ENCODE measurements at regions of chr6 and their contacts with region 1.

Region 1: DNA sequence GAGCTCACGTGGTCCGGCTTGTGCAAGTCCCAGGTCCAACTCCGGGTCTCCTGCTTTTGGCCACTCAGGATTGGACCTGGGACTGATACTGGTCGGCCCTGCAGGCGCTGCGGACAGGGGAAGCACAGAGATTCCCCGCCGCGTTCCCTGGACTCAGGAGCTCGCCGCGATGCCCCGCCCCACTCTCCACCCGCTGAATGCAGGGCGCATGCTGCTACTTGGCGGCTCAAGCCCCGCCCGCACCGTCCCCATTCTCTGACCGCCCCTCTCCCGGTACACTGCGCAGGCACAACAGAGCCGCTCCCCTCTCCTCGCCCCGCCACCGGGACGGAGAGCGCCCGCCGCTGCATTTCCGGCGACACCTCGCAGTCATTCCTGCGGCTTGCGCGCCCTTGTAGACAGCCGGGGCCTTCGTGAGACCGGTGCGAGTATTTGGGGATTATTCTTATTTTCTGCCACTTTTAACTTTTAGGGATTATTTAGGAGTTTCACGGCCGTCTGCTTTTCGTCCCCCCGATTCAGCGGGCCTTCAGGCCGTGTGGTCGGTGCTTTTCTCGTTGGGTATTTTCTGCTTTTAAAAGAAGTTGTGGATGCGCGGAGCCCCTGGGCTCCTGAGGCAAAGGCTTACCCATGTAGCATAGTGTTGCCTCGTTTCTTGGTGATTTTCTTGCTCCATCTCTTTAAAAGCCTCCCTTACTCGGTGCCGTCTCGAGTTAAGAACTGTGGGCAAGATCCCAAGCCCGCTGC is at the start of gene TMEM14C:
- DNase-seq: peak; percentile 95
- ATAC-seq: peak; percentile 99
- H3K4me3 ChIP-seq: peak within 1 kb of the TSS; percentile 78 to 85
- H3K27ac ChIP-seq: peak within 1 kb of the TSS; percentile 71
- H3K4me1 ChIP-seq: peaks cover 12 to 21% of the 10 kb centered on the region in 2 experiments; a peak in 3 of 4 replicates
- H3K27me3 ChIP-seq: no peaks in the 10 kb centered on the region
- CTCF ChIP-seq: no peak
- POLR2A ChIP-seq: peak; percentile 65
- RAD21 ChIP-seq: no peak
- total RNA-seq, gene TMEM14C: 84.7 TPM

Region 2: GRCh38 chr6:10363911-10364310 is 359.1 kb before region 1 on chr6:
- CTCF ChIA-PET with region 1: no interaction called
- POLR2A ChIA-PET with region 1: no interaction called
- RAD21 ChIA-PET with region 1: no interaction called
- intact Hi-C with region 1: no loop called
- DNase-seq: no peak
- ATAC-seq: no peak
- H3K4me3 ChIP-seq: no peak overlapping the region
- H3K27ac ChIP-seq: no peak overlapping the region
- H3K4me1 ChIP-seq: no peaks in the 10 kb centered on the region
- H3K27me3 ChIP-seq: no peaks in the 10 kb centered on the region
- CTCF ChIP-seq: no peak
- POLR2A ChIP-seq: no peak
- RAD21 ChIP-seq: no peak

Region 3: GRCh38 chr6:10747251-10747972 is 24.4 kb after region 1 on chr6 and contains the start of gene TMEM14B:
- CTCF ChIA-PET with region 1: interaction called, 3 read pairs
- POLR2A ChIA-PET with region 1: interaction called, 11 read pairs
- RAD21 ChIA-PET with region 1: no interaction called
- intact Hi-C with region 1: loop called (anchors 1 kb)
- DNase-seq: peak; percentile 91
- ATAC-seq: peak; percentile 98
- H3K4me3 ChIP-seq: peak within 1 kb of the TSS; percentile 84 to 90
- H3K27ac ChIP-seq: peak within 1 kb of the TSS; percentile 57
- H3K4me1 ChIP-seq: peaks cover 9 to 21% of the 10 kb centered on the region in 2 experiments; a peak in 3 of 4 replicates
- H3K27me3 ChIP-seq: no peaks in the 10 kb centered on the region
- CTCF ChIP-seq: no peak
- POLR2A ChIP-seq: peak; percentile 92
- RAD21 ChIP-seq: no peak
- total RNA-seq, gene TMEM14B: 83.6 TPM